Panc1 (cell line): ENCODE measurements at regions of chr17 and their contacts with region 1.

Region 1: DNA sequence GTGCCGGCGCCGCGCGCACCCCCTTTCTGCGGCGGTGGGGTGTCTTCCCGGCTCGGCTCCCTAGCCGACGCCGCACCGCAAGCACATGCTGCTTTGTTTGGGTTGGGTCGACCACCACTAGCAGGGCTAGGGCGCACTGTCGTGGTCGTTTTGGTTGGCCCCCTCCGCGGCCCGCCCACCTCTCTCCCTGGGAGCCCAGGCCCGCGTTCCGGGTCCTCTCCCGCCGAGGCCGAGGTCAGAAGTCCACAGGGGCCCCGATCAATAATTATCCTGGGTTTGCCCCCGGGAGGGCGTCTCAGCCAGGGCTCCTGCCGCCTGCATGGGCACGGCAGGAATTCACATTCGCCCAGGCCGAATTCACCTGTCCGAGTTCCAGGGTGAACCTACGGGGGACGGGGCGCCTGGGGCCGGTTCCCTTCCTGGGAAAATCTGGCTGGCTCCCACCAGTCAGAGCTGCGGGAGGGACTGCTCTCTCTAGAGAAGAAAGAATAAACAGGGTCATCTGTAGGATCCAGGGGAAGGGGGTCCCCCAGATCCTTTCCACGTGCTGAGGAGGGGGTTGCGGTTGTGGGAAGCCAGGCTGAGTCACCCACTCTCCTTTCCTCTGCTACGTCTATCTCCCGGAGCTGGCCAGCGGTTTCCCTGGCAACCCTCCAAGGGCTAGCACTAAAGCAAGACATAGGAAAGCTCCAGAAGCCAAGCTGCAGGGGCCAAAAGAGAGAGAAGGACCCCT is 584 bp upstream of the STAT5B start:
- DNase-seq: no peak
- ATAC-seq: peak; percentile 57
- H3K4me3 ChIP-seq: peak overlapping the region; percentile 52 to 55
- H3K27ac ChIP-seq: peak overlapping the region; percentile 90
- H3K4me1 ChIP-seq: peaks cover 25% of the 10 kb centered on the region
- H3K27me3 ChIP-seq: no peaks in the 10 kb centered on the region
- CTCF ChIP-seq: no peak

Region 2: DNA sequence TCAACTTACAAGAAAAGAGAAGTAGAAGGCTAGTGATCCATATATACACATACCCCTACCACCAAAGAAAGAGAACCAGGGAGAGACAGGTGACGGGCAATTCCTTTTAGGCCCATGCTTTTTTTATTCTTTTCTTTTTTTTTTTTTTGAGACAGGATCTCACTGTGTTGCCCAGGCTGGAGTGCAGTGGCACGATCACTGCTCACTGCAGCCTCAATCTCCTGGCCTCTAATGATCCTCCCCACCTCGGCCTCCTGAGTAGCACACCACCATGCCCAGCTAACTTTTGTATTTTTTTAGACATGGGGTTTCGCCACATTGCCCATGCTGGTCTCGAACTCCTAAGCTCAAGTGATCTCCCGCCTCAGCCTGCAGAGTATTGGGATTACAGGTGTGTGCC is 149.4 kb before region 1 on chr17:
- CTCF ChIA-PET with region 1: no interaction called
- POLR2A ChIA-PET with region 1: interaction called, 14 read pairs
- in situ Hi-C with region 1: no loop called
- intact Hi-C with region 1: no loop called
- DNase-seq: no peak
- ATAC-seq: no peak
- H3K4me3 ChIP-seq: no peak overlapping the region
- H3K27ac ChIP-seq: no peak overlapping the region
- H3K4me1 ChIP-seq: no peaks in the 10 kb centered on the region
- H3K27me3 ChIP-seq: no peaks in the 10 kb centered on the region
- CTCF ChIP-seq: no peak

Region 3: DNA sequence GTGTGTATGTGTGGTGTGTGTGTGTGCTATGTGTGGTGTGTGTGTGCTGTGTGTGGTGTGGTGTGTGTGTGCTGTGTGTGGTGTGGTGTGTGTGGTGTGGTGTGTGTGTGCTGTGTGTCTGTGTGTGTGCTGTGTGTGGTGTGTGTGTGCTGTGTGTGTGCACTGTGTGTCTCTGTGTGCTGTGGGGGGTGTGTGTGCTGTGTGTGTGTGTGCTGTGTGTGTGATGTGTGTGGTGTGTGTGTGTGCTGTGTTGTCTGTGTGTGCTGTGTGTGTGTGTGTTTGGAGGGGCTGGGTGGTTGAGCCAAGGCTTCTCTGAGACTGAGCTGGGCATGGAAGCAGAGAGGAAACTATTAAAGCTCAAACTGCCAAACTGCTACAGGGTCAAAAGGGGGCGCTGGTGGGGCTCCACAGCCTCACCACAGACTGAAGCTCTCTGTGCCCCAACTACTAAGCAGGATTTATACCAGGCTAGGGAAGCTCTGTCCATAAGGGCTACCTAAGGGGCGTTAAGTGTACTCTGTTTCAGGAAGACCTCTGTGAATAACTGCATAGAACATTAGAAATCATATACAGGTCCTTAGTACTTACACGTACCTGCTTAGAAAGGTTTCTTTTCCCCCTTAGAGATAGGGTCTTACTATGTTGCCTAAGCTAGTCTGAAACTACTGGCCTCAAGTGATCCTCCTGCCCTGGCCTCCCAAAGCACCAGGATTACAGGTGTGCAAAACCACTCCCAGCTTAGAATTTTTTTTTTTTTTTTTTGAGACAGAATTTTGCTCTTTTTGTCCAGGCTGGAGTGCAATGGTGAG is 54.6 kb before region 1 on chr17:
- CTCF ChIA-PET with region 1: interaction called, 18 read pairs
- POLR2A ChIA-PET with region 1: no interaction called
- in situ Hi-C with region 1: no loop called
- intact Hi-C with region 1: loop called (anchors 5 kb)
- DNase-seq: peak; percentile 38
- ATAC-seq: peak; percentile 88
- H3K4me3 ChIP-seq: no peak overlapping the region
- H3K27ac ChIP-seq: peak overlapping the region; percentile 61
- H3K4me1 ChIP-seq: peaks cover 1% of the 10 kb centered on the region; the same call in 1 of the 2 replicates
- H3K27me3 ChIP-seq: no peaks in the 10 kb centered on the region
- CTCF ChIP-seq: peak; percentile 73

Region 4: DNA sequence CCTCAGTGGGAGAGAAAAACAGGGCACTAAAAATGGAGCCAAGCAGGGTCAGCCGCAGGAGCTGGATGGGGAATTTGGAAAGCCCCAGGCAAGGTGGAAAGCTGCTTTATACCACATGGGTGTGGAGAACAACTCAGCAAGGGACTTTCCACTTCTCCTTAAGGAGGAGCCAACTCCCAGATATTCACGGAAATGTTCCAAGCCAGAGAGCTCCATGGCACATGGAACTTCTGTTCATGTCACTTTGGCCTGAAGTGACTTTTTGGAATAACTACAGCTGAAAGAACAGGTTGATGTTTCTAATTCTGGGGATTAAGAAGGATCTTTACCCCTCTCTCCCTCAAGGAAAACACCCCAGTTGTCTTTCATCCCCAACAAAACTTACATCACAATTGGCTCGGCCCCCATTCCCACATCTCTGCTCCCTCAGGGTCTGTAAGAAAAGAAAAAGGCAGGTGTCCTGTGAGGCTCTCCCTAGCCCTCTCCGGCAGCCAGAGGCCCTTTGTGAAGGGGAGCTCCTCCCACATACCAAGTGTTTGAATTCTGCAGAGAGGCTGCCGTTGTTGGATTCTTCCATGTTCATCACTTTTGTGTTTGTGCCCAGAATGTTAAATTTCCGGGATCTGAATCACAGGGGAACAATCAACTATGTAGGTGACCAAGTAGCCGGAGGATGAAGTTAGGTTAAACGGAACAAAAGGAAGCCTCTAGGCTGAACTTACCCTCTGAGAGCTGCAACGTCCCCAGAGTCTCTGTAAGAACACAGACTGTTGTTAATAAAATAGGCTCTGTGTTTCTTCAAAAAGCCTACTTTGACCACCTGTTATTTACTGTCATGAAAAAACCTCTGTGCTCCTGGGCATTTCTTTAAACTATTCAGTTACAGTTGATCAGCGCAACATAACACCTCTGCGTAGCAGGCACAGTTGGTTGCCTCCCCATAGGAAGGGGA is 52.5 kb after region 1 on chr17:
- CTCF ChIA-PET with region 1: no interaction called
- POLR2A ChIA-PET with region 1: no interaction called
- in situ Hi-C with region 1: no loop called
- intact Hi-C with region 1: no loop called
- DNase-seq: no peak
- ATAC-seq: peak; percentile 85
- H3K4me3 ChIP-seq: no peak overlapping the region
- H3K27ac ChIP-seq: peak overlapping the region; percentile 98
- H3K4me1 ChIP-seq: peaks cover 52% of the 10 kb centered on the region
- H3K27me3 ChIP-seq: no peaks in the 10 kb centered on the region
- CTCF ChIP-seq: no peak

Region 5: DNA sequence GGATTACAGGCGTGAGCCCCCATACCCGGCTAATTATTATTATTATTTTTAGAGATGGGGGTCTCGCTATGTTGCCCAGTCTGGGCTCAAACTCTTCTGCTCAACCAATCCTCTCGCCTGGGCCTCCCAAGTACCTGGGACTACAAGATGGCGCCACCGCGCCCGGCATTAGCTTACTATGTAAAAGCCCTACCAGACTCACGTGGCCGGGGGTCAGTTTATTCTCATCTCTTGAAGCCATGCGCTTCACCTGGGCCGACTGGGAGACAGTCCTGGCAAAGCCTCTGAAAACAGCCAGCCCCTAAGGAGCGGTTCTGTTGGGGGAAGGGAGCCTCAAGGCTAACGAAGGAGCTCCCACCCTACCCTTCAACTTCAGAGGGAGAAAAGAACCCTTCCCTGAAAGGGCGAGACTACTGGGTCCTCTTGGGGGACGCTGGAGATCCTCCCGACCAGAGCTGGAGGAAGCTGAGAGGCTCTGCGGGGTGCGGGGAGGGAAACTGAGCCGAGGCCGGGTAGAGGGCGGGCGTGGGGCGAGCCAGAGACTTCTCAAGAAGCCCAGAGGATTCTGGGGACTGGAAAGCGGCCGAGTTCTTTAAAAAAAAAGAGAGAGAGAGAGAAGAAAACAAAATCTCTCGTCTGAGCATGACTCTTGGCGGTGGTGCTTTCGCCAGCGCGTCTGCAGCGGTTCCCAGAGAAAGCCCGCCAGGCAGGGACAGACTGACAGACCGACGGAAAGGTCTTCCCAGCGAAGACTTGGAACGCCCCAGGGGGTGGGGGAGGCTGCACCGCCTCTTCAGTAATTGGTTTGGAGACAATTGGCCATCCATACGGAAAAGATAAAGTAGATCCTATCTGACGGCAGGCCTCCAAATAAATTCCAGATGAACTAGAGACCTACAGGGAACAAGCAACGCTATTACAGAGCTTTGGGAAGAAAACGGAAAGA is 376.7 kb after region 1 on chr17:
- CTCF ChIA-PET with region 1: no interaction called
- POLR2A ChIA-PET with region 1: no interaction called
- in situ Hi-C with region 1: no loop called
- intact Hi-C with region 1: no loop called
- DNase-seq: no peak
- ATAC-seq: peak; percentile 49; the same call in 1 of the 2 replicates
- H3K4me3 ChIP-seq: peak overlapping the region; percentile 10 to 21
- H3K27ac ChIP-seq: peak overlapping the region; percentile 42; the same call in 1 of the 2 replicates
- H3K4me1 ChIP-seq: no peaks in the 10 kb centered on the region
- H3K27me3 ChIP-seq: no peaks in the 10 kb centered on the region
- CTCF ChIP-seq: no peak

Region 6: GRCh38 chr17:42798383-42799380 is 521.9 kb after region 1 on chr17 and contains the starts of genes CNTD1 and COA3:
- CTCF ChIA-PET with region 1: no interaction called
- POLR2A ChIA-PET with region 1: no interaction called
- in situ Hi-C with region 1: no loop called
- intact Hi-C with region 1: no loop called
- DNase-seq: peak; percentile 20
- ATAC-seq: peak; percentile 98
- H3K4me3 ChIP-seq: peak within 1 kb of the TSS; percentile 90 to 92
- H3K27ac ChIP-seq: peak within 1 kb of the TSS; percentile 86
- H3K4me1 ChIP-seq: peaks cover 13% of the 10 kb centered on the region
- H3K27me3 ChIP-seq: no peaks in the 10 kb centered on the region
- CTCF ChIP-seq: no peak
- total RNA-seq, gene CNTD1: 0.13 TPM
- total RNA-seq, gene COA3: 48.8 TPM

Region 7: DNA sequence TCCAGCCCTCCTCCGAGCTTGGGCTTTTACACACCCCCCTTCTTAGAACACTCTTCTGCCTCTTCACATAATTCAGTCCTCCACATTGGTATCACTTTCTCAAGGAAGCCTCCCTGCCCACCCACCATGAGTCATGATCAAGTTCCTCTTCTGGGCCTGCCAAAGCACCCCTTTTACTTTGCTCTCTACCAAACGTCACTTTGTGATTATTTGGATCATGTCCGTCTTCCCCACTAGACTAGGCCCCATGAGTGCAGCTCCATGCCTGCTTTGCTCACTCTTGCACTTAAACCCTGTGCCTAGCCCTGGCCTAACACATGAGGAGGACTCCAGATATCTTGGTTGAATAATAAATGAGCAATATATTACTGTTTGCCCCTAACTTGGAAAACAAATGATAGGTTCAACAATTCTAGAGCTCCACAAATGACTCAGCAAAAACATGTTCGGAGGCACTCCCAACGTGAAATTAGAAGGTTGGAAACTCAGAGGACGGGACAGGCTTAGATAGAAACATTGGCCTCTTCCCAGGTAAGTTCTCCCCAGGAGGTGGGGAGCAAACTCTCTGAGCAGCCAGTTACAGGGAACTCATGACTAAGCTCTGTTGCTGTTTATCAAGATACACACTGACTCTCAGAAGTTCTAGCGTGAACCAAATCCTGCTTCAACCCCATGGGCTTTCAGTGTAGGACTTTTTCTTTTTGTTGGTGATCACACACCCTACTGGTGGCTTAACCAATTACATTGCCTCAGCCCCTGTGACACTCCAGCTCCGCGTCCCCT is 652.1 kb after region 1 on chr17:
- CTCF ChIA-PET with region 1: no interaction called
- POLR2A ChIA-PET with region 1: no interaction called
- in situ Hi-C with region 1: no loop called
- intact Hi-C with region 1: no loop called
- DNase-seq: no peak
- ATAC-seq: peak; percentile 90
- H3K4me3 ChIP-seq: no peak overlapping the region
- H3K27ac ChIP-seq: no peak overlapping the region
- H3K4me1 ChIP-seq: no peaks in the 10 kb centered on the region
- H3K27me3 ChIP-seq: no peaks in the 10 kb centered on the region
- CTCF ChIP-seq: peak; percentile 63